Activated B cell treated with CpG ODN at 0.5 μM for 24 hours (primary cell): ENCODE measurements at regions of chr5 and their contacts with region 1.

Region 1: GRCh38 chr5:126776497-126777256 is at the start of gene LMNB1:
- DNase-seq: peak; percentile 94
- ATAC-seq: peak; percentile 71
- H3K4me3 Mint-ChIP-seq: peak within 1 kb of the TSS; percentile 92
- H3K27ac Mint-ChIP-seq: peak within 1 kb of the TSS; percentile 96
- H3K4me1 Mint-ChIP-seq: peaks cover 36% of the 10 kb centered on the region
- H3K27me3 Mint-ChIP-seq: no peaks in the 10 kb centered on the region
- CTCF ChIP-seq: no peak
- total RNA-seq, gene LMNB1: 34.7 and 35.7 TPM in 2 replicates

Region 2: DNA sequence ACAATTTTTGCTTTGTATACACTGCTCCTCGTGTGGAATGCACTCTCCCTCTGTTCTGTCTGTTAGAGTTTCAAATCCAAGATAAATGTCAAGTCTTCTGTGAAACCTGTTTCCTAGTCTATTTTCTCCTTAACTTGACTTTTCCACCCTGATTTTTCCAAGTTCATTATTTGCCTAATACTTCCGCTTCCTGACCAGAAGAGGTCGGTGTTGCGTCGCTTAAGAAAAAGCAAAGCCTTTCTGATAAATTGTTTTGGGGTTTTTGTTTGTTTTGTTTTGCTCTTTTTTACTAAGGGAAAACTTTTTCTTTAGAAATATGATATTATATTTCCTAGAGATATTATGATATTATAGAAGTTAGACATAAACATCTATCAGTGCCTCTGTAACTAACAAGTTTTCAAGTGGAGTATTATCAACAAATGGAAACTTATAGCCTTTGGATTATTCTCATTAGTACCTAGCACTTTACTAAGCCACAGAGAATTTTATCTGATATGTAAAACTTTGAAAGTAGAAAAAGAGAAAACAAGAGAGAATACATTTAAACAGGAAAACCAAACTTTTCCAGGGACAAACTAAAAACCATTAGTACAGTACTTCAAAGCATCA is 120.2 kb before region 1 on chr5:
- CTCF ChIA-PET with region 1: interaction called, 28 read pairs
- POLR2A ChIA-PET with region 1: interaction called, 3 read pairs
- intact Hi-C with region 1: loop called (anchors 1 kb)
- DNase-seq: no peak
- ATAC-seq: no peak
- H3K4me3 Mint-ChIP-seq: no peak overlapping the region
- H3K27ac Mint-ChIP-seq: no peak overlapping the region
- H3K4me1 Mint-ChIP-seq: peaks cover 6% of the 10 kb centered on the region
- H3K27me3 Mint-ChIP-seq: peaks cover 2% of the 10 kb centered on the region
- CTCF ChIP-seq: peak; percentile 51

Region 3: GRCh38 chr5:126757713-126758357 is 18.8 kb before region 1 on chr5:
- CTCF ChIA-PET with region 1: no interaction called
- POLR2A ChIA-PET with region 1: interaction called, 48 read pairs
- intact Hi-C with region 1: loop called (anchors 1 kb)
- DNase-seq: no peak
- ATAC-seq: no peak
- H3K4me3 Mint-ChIP-seq: peak overlapping the region; percentile 46
- H3K27ac Mint-ChIP-seq: peak overlapping the region; percentile 69
- H3K4me1 Mint-ChIP-seq: peaks cover 38% of the 10 kb centered on the region
- H3K27me3 Mint-ChIP-seq: no peaks in the 10 kb centered on the region
- CTCF ChIP-seq: no peak

Region 4: GRCh38 chr5:126801992-126802294 is 25.3 kb after region 1 on chr5:
- CTCF ChIA-PET with region 1: interaction called, 13 read pairs
- POLR2A ChIA-PET with region 1: interaction called, 15 read pairs
- intact Hi-C with region 1: loop called (anchors 1 kb)
- DNase-seq: no peak
- ATAC-seq: peak; percentile 28
- H3K4me3 Mint-ChIP-seq: no peak overlapping the region
- H3K27ac Mint-ChIP-seq: no peak overlapping the region
- H3K4me1 Mint-ChIP-seq: peaks cover 37% of the 10 kb centered on the region
- H3K27me3 Mint-ChIP-seq: no peaks in the 10 kb centered on the region
- CTCF ChIP-seq: no peak

Region 5: GRCh38 chr5:126988021-126988569 is 211.4 kb after region 1 on chr5:
- CTCF ChIA-PET with region 1: no interaction called
- POLR2A ChIA-PET with region 1: interaction called, 3 read pairs
- intact Hi-C with region 1: loop called (anchors 2 kb)
- DNase-seq: no peak
- ATAC-seq: peak; percentile 84
- H3K4me3 Mint-ChIP-seq: peak overlapping the region; percentile 82
- H3K27ac Mint-ChIP-seq: peak overlapping the region; percentile 97
- H3K4me1 Mint-ChIP-seq: peaks cover 88% of the 10 kb centered on the region
- H3K27me3 Mint-ChIP-seq: no peaks in the 10 kb centered on the region
- CTCF ChIP-seq: no peak

Region 6: DNA sequence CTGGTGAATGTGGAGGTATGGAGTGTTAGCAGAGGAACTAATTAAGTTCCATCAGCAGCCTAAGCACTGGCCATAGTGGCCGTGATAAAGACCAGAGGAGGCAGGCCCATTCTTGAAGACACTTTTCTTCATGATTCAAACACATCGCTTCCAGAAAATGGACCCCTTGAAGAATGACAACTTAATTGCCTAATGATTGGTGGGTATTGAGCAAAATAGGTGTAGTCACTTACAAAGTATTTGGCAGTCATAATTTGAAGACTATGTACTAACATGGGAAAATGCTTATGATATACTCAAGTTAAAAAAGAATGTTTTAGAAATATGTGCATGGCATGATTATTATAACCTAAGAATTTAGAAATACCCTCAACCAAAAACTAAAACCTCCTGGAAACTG is 558.7 kb after region 1 on chr5:
- CTCF ChIA-PET with region 1: no interaction called
- POLR2A ChIA-PET with region 1: no interaction called
- intact Hi-C with region 1: no loop called
- DNase-seq: no peak
- ATAC-seq: no peak
- H3K4me3 Mint-ChIP-seq: no peak overlapping the region
- H3K27ac Mint-ChIP-seq: no peak overlapping the region
- H3K4me1 Mint-ChIP-seq: no peaks in the 10 kb centered on the region
- H3K27me3 Mint-ChIP-seq: peaks cover 24% of the 10 kb centered on the region
- CTCF ChIP-seq: no peak

Region 7: DNA sequence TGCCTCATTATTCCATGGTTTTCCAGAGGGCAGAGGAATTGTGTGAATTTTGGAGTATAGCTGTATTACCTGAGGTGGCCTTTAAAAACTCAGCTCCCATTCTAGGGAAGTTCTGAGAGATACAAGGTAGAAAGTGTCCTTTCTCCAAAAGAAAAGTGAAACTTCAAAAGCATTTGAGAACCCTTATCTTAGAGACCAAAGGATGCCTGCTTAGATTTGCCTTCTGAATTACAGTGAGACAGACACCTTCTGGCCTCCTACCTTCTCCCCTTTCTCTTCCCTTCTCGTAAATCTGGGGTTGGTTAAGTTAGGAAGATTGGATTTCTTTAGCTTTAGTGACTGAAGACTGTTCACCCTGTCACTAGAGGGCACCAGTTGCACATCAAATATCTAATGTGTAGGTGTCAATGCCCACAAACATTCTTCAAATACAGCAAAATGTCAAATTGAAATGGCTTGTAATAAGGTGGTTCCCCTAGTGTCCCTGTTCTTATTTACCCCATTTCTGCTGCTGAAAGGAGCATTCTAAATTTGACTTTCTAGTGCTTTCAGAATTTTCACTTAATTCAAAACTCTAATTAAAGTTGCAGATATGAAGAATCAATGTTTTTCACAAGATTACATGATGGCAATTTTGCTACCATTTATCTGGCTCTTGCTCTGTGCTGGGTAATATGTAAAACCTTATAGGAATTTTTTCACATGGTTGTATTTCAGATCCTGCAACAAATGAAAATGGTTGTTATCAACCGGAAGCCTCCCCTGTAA is 787.5 kb after region 1 on chr5:
- CTCF ChIA-PET with region 1: no interaction called
- POLR2A ChIA-PET with region 1: no interaction called
- intact Hi-C with region 1: no loop called
- DNase-seq: no peak
- ATAC-seq: peak; percentile 64
- H3K4me3 Mint-ChIP-seq: no peak overlapping the region
- H3K27ac Mint-ChIP-seq: no peak overlapping the region
- H3K4me1 Mint-ChIP-seq: peaks cover 3% of the 10 kb centered on the region
- H3K27me3 Mint-ChIP-seq: peaks cover 11% of the 10 kb centered on the region
- CTCF ChIP-seq: peak; percentile 38

Region 8: GRCh38 chr5:128083033-128083810 is 1306.5 kb after region 1 on chr5 and contains the start of gene SLC12A2:
- CTCF ChIA-PET with region 1: no interaction called
- POLR2A ChIA-PET with region 1: interaction called, 4 read pairs
- intact Hi-C with region 1: loop called (anchors 2 kb)
- DNase-seq: peak; percentile 92
- ATAC-seq: peak; percentile 75
- H3K4me3 Mint-ChIP-seq: peak within 1 kb of the TSS; percentile 95
- H3K27ac Mint-ChIP-seq: peak within 1 kb of the TSS; percentile 97
- H3K4me1 Mint-ChIP-seq: peaks cover 72% of the 10 kb centered on the region
- H3K27me3 Mint-ChIP-seq: no peaks in the 10 kb centered on the region
- CTCF ChIP-seq: no peak
- total RNA-seq, gene SLC12A2: 19.9 and 20.6 TPM in 2 replicates